ENCODE measurements at regions of chrX and their contacts with region 1.

Region 1: GRCh38 chrX:100413229-100413628 is 3.2 kb upstream of the PCDH19 start:
- DNase-seq: peak; percentile 43
- ATAC-seq: no peak
- H3K4me3 Mint-ChIP-seq: no peak overlapping the region
- H3K27ac Mint-ChIP-seq: no peak overlapping the region
- H3K4me1 Mint-ChIP-seq: peaks cover 9% of the 10 kb centered on the region
- H3K27me3 Mint-ChIP-seq: peaks cover 32% of the 10 kb centered on the region

Region 2: GRCh38 chrX:99301990-99302389 is 1111.2 kb before region 1 on chrX:
- CTCF ChIA-PET with region 1: no interaction called
- POLR2A ChIA-PET with region 1: no interaction called
- intact Hi-C with region 1: loop called in 1 of 2 experiments (anchors 5 kb)
- DNase-seq: no peak
- ATAC-seq: no peak
- H3K4me3 Mint-ChIP-seq: no peak overlapping the region
- H3K27ac Mint-ChIP-seq: no peak overlapping the region
- H3K4me1 Mint-ChIP-seq: no peaks in the 10 kb centered on the region
- H3K27me3 Mint-ChIP-seq: no peaks in the 10 kb centered on the region

Region 3: DNA sequence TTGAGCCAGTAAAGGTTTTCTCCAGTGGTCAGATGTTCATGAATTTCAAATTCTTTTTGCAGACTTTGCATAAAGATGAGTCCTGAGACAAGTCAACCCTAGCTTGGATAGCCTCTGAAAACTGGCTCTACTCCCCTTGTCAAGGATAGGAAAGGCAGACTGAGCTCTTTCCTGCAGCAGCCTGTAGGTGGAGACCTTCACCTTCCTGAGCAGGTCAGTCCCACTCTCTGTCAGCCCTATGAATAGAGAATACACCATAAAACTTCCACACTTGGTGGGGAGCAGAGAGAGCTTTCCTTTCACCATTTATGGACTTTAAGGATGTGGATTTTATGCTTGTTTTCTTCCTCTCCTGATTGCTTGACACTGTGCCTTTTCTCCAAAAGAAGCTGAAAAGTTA is 45.1 kb before region 1 on chrX:
- CTCF ChIA-PET with region 1: interaction called, 5 read pairs
- POLR2A ChIA-PET with region 1: no interaction called
- intact Hi-C with region 1: loop called in 1 of 2 experiments (anchors 2 kb)
- DNase-seq: peak; percentile 16
- ATAC-seq: no peak
- H3K4me3 Mint-ChIP-seq: no peak overlapping the region
- H3K27ac Mint-ChIP-seq: no peak overlapping the region
- H3K4me1 Mint-ChIP-seq: no peaks in the 10 kb centered on the region
- H3K27me3 Mint-ChIP-seq: no peaks in the 10 kb centered on the region

Region 4: GRCh38 chrX:100484971-100485370 is 71.7 kb after region 1 on chrX:
- CTCF ChIA-PET with region 1: no interaction called
- POLR2A ChIA-PET with region 1: no interaction called
- intact Hi-C with region 1: no loop called
- DNase-seq: no peak
- ATAC-seq: no peak
- H3K4me3 Mint-ChIP-seq: no peak overlapping the region
- H3K27ac Mint-ChIP-seq: no peak overlapping the region
- H3K4me1 Mint-ChIP-seq: no peaks in the 10 kb centered on the region
- H3K27me3 Mint-ChIP-seq: no peaks in the 10 kb centered on the region

Region 5: GRCh38 chrX:100748108-100748507 is 334.9 kb after region 1 on chrX:
- CTCF ChIA-PET with region 1: no interaction called
- POLR2A ChIA-PET with region 1: no interaction called
- intact Hi-C with region 1: no loop called
- DNase-seq: no peak
- ATAC-seq: no peak
- H3K4me3 Mint-ChIP-seq: no peak overlapping the region
- H3K27ac Mint-ChIP-seq: no peak overlapping the region
- H3K4me1 Mint-ChIP-seq: no peaks in the 10 kb centered on the region
- H3K27me3 Mint-ChIP-seq: peaks cover 10% of the 10 kb centered on the region